ENCODE measurements at regions of chr15 and their contacts with region 1.

Region 1: GRCh38 chr15:78437762-78438302 is at the start of gene IREB2:
- DNase-seq: peak; percentile 97
- ATAC-seq: peak; percentile 96
- H3K4me3 ChIP-seq: peak within 1 kb of the TSS; percentile 97
- H3K27ac ChIP-seq: peak within 1 kb of the TSS; percentile 54
- H3K4me1 ChIP-seq: peaks cover 13% of the 10 kb centered on the region; the same call in 1 of the 2 replicates
- H3K27me3 ChIP-seq: no peaks in the 10 kb centered on the region
- CTCF ChIP-seq: no peak
- total RNA-seq, gene IREB2: 6.5 and 9.0 TPM in 2 replicates

Region 2: DNA sequence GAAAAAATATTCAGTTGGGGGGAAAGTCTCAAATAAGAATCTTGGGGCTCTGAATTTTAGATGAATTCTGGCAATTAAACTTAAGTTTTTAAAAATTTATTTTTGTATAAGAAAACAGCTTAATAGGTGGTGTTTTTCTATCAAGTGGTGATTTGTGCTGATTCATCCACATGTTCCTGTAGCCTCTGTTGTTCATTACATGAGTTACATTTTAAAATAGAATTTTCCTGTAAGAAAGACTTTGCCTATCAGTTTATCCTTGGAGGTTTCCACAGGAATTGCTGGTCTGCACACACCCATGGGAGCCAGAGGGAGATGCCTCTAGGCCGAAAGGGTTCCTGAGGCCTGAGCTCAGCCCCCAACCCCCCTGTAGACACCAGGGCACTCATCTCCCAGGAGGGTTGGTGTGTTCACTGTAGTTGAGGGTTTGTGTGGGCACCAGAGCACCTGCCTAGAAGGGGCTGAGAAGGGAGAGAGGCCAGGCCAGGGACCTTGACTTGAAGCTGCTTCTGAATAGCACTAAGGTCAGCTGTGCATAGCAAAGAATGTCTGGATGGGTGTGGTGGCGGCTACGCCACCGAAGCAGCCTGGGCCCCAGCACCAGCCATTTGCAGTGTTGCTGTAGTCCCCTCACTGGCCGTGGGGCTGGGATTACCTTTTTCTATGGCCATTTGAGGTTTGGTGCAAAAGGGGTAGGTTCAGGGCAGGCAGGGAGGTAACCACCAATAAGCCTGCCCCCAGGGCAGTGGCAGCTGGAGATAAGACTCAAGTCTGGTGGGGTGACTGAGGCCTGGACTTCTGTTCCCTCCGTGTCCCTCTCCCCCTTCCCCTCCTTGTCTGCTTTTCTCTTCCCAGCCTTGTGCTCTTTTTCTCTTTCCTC is 161.5 kb before region 1 on chr15:
- CTCF ChIA-PET with region 1: no interaction called
- POLR2A ChIA-PET with region 1: no interaction called
- intact Hi-C with region 1: no loop called
- DNase-seq: no peak
- ATAC-seq: no peak
- H3K4me3 ChIP-seq: no peak overlapping the region
- H3K27ac ChIP-seq: no peak overlapping the region
- H3K4me1 ChIP-seq: no peaks in the 10 kb centered on the region
- H3K27me3 ChIP-seq: no peaks in the 10 kb centered on the region
- CTCF ChIP-seq: no peak

Region 3: DNA sequence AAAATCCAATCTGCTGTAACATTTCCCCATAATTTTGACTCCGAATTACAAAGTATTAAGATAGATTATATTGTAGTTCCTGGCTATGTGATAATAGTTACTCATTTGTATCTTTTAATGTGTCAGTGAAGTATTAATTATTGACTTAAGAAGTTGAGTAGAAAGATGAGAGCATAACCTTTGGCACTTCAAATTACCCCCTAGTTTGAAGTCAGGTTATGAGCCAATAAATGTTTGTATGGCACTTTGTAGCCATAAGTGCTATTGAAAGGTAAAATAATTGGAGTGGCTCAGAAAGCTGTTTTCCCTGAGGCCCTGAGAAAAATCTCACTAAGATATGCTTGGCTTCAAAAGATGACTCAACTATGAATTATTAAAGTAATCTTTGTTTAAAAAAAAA is 31.2 kb after region 1 on chr15:
- CTCF ChIA-PET with region 1: no interaction called
- POLR2A ChIA-PET with region 1: no interaction called
- intact Hi-C with region 1: no loop called
- DNase-seq: no peak
- ATAC-seq: no peak
- H3K4me3 ChIP-seq: no peak overlapping the region
- H3K27ac ChIP-seq: no peak overlapping the region
- H3K4me1 ChIP-seq: no peaks in the 10 kb centered on the region
- H3K27me3 ChIP-seq: no peaks in the 10 kb centered on the region
- CTCF ChIP-seq: no peak

Region 4: DNA sequence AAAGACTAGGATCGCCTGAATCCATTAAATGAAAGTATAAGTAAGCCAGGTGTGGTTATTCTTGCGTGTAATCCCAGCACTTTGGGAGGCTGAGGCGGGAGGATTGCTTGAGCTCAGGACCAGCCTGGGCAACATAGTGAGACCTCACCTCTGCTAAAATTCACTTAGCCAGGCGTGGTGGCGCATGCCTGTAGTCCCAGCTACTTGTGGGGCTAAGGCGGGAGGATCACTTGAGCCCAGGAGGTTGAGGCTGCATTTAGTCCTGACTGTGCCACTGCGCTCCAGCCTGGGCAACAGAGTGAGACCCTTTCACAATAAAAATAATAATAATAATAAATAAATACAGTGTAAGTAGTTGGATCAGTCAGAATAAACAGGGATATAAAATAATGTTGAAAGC is 44.1 kb after region 1 on chr15:
- CTCF ChIA-PET with region 1: no interaction called
- POLR2A ChIA-PET with region 1: no interaction called
- intact Hi-C with region 1: loop called (anchors 10 kb)
- DNase-seq: no peak
- ATAC-seq: no peak
- H3K4me3 ChIP-seq: no peak overlapping the region
- H3K27ac ChIP-seq: no peak overlapping the region
- H3K4me1 ChIP-seq: no peaks in the 10 kb centered on the region
- H3K27me3 ChIP-seq: no peaks in the 10 kb centered on the region
- CTCF ChIP-seq: no peak

Measured in PC-3 (cell line).